Ascending aorta (tissue), 2 donors: ENCODE measurements at regions of chr6 and their contacts with region 1.

Region 1: DNA sequence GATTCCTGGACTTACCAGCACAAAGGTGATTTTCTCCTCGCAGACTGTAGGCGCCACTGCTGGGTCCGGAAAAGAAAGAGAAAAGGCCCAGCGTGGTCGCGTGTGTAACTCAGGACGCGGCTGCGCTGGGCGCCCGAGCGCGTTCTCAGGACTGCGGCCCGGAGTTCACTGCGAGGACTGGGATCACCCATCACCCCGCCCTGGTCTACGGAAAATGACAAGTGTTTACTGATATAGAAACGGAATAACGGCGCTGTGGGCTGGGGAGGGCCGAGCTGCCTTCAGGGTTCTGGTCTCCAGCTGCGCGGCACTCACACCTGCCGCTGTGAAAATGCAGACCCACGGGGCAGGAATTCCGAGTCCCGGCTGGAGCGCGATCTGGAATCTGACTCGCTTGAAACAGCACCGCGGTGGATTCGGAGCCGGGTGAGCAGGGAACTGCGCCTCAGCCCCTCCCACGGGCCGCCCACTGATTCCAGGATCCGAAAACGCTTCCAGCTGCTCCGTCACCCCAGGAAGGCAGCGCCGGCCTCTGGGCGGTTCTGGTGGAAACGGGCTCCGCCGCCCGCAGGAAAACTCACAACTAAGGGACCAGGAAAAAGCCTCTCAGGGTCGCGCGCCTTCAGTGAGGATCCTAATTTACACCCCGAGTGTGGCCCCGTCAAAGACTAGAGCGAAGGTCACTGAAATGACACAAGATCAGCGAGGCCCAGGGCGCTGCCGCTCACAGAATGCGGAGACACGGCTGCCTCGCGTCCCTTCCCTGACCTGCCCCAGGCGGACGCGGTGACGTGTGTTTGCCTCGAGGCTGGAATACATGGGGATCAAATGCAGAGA is 34.5 kb downstream of the HLA-A start:
- DNase-seq: peak; percentile 51 to 91
- H3K4me3 ChIP-seq: peak overlapping the region; percentile 46 to 61
- H3K27ac ChIP-seq: peak overlapping the region; percentile 91 to 96
- H3K4me1 ChIP-seq: peaks cover 0 to 12% of the 10 kb centered on the region in 2 donors
- H3K27me3 ChIP-seq: no peaks in the 10 kb centered on the region
- CTCF ChIP-seq: peak; percentile 16 to 42 (median 33)

Region 2: DNA sequence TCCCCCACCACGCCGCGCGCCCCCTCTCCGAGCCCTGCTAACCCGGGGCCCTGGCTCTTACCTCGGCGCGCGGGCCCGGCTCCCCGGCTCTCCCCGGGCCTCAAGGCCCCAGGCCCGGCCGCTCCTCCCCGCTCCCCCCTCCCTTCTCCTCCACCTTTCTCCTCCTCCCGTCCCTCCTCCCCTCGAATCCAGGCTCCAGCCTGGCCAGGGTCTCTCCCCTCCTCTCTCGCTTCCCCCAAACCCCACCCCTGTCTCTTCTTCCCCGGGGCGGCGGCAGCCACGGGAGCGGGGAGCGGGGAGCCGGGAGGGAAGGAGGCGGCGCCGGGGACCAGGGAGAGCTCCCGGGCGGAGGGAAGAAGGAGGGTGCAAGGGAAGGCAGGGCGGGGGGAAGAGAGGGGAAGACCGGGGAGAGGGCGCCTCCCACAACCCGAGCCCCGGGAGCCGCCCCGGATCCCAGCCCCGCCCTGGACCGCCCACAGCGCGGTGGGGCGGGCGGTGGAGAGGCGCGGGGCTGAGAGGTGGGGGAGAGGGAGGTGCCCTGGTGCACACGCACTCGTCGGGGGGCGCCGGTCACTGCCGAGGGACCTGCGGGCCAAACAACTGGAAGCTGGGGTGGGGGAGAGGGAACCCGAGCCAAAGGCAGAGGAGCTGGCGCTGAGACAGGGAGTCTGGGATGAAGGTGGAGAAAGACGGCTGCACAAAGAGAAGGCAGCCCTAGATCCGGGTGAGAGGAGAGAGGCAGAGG is 343.8 kb before region 1 on chr6 and contains the start of gene GABBR1:
- intact Hi-C with region 1: loop called (anchors 5 kb)
- DNase-seq: peak; percentile 42 to 94
- H3K4me3 ChIP-seq: peak within 1 kb of the TSS; percentile 77 to 81
- H3K27ac ChIP-seq: peak within 1 kb of the TSS; percentile 79 to 81
- H3K4me1 ChIP-seq: peaks cover 8 to 17% of the 10 kb centered on the region in 2 donors
- H3K27me3 ChIP-seq: no peaks in the 10 kb centered on the region
- CTCF ChIP-seq: no peak
- total RNA-seq, gene GABBR1: 166 TPM

Region 3: DNA sequence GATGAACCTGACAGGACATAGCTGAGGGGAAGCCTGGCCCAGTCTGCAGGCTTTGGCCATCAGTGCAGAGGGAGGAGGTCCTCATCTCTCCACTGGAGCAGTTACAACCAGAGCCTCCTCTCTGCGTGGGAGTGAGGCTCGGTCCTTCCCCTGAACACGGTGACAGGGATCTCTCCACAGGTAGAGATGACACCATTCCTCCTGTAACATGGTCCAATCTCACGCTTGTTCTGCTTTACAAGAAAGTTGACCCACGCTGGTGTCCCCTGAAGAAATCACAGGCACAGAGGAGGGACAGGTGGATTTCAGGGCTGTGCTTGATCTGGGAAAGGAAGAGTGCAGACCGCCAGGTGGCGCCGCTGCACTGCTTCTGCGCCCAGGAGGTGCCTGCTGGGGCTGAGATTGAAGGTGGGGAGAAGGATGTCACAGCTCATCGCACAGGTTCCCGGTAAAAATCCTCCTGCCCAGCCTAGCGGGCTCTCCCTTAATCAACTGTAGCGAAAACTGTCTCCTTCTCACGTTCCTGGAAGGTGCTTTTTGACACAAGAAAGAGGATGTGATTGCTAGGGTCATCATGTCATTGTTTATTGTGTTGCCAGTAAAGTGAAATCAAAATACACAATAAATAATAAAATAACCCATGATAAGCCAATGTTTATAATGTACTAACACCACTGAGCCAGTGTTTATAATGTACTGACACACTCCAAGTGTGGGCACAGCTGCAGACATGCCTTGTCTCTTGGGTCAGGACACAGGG is 128.8 kb before region 1 on chr6:
- intact Hi-C with region 1: loop called (anchors 1 kb)
- DNase-seq: peak in 1 of 2 donors; percentile 86
- H3K4me3 ChIP-seq: no peak overlapping the region
- H3K27ac ChIP-seq: no peak overlapping the region
- H3K4me1 ChIP-seq: peaks cover 0 to 5% of the 10 kb centered on the region in 2 donors
- H3K27me3 ChIP-seq: no peaks in the 10 kb centered on the region
- CTCF ChIP-seq: peak; percentile 81 to 93 (median 90)

Region 4: GRCh38 chr6:29926413-29927274 is 50.2 kb before region 1 on chr6:
- intact Hi-C with region 1: loop called (anchors 5 kb)
- DNase-seq: peak in 1 of 2 donors; percentile 82
- H3K4me3 ChIP-seq: peak overlapping the region in 1 of 2 donors; percentile 66
- H3K27ac ChIP-seq: peak overlapping the region in 1 of 2 donors; percentile 79
- H3K4me1 ChIP-seq: no peaks in the 10 kb centered on the region
- H3K27me3 ChIP-seq: no peaks in the 10 kb centered on the region
- CTCF ChIP-seq: no peak

Region 5: DNA sequence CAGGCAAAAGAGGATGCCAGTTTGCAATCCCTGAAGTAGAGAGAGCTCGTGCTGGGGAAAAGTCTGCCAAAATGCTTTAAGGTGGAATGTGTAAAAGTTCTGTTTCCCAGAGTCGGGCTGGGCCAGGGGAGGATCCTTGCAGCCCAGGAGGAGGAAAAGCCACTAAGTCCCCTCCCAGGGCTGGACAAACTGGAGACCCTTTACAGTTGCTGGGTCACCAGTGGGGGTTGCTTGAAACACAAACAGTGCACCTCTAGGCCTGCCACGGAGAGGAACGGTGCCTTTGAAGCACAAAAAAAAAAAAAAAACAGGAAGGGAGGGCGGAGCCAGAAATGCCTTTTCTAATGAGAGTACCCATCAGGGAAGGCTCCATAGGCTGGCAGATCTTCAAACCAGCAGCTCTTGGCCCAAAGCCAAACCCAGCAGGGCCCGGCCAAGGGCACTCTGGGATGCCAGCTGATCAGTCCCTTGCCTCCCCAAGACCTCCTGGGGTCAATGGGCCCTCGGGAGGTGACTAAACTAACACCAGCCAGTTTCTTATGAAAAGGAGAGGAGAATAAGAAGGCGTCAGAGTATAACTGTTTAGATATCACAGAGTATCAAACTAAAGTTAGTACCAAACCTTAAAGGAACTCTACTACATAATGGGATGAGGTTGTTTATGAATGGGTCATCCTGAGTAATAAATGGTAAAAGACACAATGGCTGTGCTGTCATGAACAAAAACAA is 10.8 kb before region 1 on chr6:
- intact Hi-C with region 1: loop called (anchors 1 kb)
- DNase-seq: peak; percentile 55 to 93
- H3K4me3 ChIP-seq: peak overlapping the region; percentile 40 to 50
- H3K27ac ChIP-seq: peak overlapping the region; percentile 83 to 84
- H3K4me1 ChIP-seq: peaks cover 13 to 23% of the 10 kb centered on the region in 2 donors
- H3K27me3 ChIP-seq: no peaks in the 10 kb centered on the region
- CTCF ChIP-seq: no peak

Region 6: DNA sequence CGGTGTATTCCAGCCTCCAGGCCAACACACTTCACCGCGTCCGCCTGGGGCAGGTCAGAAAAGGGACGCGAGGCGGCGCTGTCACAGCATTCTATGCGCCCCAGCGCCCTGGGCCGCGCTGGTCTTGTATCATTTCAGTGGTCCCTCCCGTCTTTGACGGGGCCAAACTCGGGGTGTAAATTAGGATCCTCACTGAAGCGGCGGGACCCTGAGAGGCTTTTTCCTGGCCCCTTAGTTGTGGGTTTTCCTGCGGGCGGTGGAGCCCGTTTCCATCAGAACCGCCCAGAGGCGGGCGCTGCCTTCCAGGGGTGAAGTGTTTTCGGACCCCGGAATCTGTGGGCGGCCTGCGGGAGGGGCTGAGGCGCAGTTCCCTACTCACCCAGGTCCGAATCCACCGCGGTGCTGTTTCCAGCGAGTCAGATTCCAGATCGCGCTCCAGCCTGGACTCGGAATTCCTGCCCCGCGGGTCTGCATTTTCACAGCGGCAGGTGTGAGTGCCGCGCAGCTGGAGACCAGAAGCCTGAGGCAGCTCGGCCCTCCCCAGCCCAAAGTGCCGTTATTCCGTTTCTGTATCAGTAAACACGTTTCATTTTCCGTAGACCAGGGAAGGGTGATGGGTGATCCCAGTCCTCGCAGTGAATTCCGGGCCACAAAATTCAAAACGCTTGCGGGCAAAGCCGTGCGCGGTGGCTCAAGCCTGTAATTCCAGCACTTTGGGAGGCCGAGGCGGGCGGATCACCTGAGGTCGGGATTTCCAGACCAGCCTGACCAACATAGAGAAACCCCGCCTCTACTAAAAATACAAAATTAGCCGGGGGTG is 1517.3 kb after region 1 on chr6:
- intact Hi-C with region 1: loop called (anchors 10 kb)
- DNase-seq: peak in 1 of 2 donors; percentile 88
- H3K4me3 ChIP-seq: peak overlapping the region; percentile 72 to 80
- H3K27ac ChIP-seq: peak overlapping the region; percentile 67 to 79
- H3K4me1 ChIP-seq: peaks cover 0 to 5% of the 10 kb centered on the region in 2 donors
- H3K27me3 ChIP-seq: no peaks in the 10 kb centered on the region
- CTCF ChIP-seq: peak; percentile 64 to 79 (median 78)